GM12878 (cell line): ENCODE measurements at regions of chr5 and their contacts with region 1.

Region 1: DNA sequence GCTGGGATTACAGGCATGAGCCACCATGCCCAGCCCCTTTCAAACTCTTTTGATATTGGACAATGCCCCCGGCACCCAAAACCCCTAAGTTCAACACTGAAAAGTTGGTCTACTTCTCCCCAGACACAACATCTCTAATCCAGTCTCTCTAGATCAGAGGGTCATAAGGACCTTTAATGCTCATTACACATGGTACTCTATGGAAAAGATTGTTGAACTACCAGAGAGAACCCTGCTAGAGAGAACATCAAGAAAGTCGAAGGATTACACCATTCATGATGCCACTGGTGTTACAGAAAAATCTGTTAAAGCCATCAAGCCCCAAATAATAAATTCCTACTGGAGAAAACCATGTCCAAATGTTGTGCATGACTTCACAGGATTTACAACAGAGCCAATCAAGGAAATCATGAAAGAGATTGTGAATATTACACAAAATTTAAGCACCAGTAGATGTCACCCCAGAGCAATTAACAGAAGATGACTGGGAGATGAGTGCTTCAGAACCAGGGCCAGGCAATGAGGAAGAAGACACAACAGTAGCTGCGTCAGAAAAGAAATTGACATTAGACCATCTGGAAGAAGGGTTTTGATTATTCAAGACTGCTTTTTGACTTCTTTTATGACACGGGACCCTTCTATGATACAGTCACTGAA is 28.3 kb upstream of the NIPAL4 start:
- DNase-seq: peak; percentile 35
- ATAC-seq: peak; percentile 99
- H3K4me3 ChIP-seq: no peak overlapping the region
- H3K27ac ChIP-seq: no peak overlapping the region
- H3K4me1 ChIP-seq: no peaks in the 10 kb centered on the region
- H3K27me3 ChIP-seq: no peaks in the 10 kb centered on the region
- CTCF ChIP-seq: peak; percentile 47 to 65 (median 56); a peak in 5 of 6 replicates
- EP300 ChIP-seq: no peak
- POLR2A ChIP-seq: no peak
- RAD21 ChIP-seq: peak; percentile 85

Region 2: GRCh38 chr5:156815988-156816599 is 615.6 kb before region 1 on chr5:
- CTCF ChIA-PET with region 1: no interaction called
- POLR2A ChIA-PET with region 1: no interaction called
- RAD21 ChIA-PET with region 1: no interaction called
- SMC1A ChIA-PET with region 1: no interaction called
- in situ Hi-C with region 1: no loop called
- intact Hi-C with region 1: no loop called
- DNase-seq: no peak
- ATAC-seq: peak; percentile 79
- H3K4me3 ChIP-seq: no peak overlapping the region
- H3K27ac ChIP-seq: no peak overlapping the region
- H3K4me1 ChIP-seq: peaks cover 7% of the 10 kb centered on the region; the same call in 1 of the 2 replicates
- H3K27me3 ChIP-seq: no peaks in the 10 kb centered on the region
- CTCF ChIP-seq: peak; percentile 50 to 71 (median 53)
- EP300 ChIP-seq: no peak
- POLR2A ChIP-seq: no peak
- RAD21 ChIP-seq: peak; percentile 85

Region 3: DNA sequence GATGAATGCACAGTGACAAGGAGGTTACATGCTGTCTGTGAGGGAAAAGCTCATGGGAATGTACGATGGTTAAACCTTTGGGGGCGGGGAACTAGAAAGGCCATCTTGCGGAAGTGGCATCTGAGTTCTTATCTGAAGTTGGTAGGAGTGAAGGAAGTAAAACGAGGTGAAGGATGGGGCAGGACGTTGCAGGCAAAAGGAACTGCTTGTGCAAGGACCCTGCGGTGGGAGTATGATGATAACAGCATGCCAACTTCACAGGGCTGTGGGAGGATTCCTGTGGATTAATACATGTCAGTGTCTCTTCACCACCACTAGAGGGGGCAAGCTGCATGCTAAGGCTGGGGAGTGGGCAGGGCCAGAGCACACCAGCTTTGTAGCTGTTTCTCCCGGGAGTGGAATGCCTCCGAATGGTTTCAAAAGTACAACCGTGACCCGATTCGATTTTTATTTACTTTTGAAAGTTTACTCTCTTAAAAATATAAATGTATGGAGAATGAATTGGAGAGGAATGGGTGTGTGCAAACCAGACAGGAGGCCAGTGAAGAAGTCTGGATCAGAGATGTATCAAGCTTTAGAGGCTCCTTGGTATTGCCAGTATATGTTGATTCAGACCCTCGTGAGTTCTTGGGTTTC is 103.3 kb before region 1 on chr5:
- CTCF ChIA-PET with region 1: interaction called, 22 read pairs
- POLR2A ChIA-PET with region 1: no interaction called
- RAD21 ChIA-PET with region 1: interaction called, 6 read pairs
- SMC1A ChIA-PET with region 1: interaction called, 3 read pairs
- in situ Hi-C with region 1: no loop called
- intact Hi-C with region 1: no loop called
- DNase-seq: no peak
- ATAC-seq: peak; percentile 100
- H3K4me3 ChIP-seq: no peak overlapping the region
- H3K27ac ChIP-seq: no peak overlapping the region
- H3K4me1 ChIP-seq: no peaks in the 10 kb centered on the region
- H3K27me3 ChIP-seq: no peaks in the 10 kb centered on the region
- CTCF ChIP-seq: peak; percentile 85 to 94 (median 91)
- EP300 ChIP-seq: no peak
- POLR2A ChIP-seq: no peak
- RAD21 ChIP-seq: peak; percentile 85

Region 4: GRCh38 chr5:157443041-157443549 is 11.4 kb after region 1 on chr5:
- CTCF ChIA-PET with region 1: interaction called, 16 read pairs
- POLR2A ChIA-PET with region 1: no interaction called
- RAD21 ChIA-PET with region 1: interaction called, 3 read pairs
- SMC1A ChIA-PET with region 1: interaction called, 7 read pairs
- in situ Hi-C with region 1: no loop called
- intact Hi-C with region 1: no loop called
- DNase-seq: no peak
- ATAC-seq: no peak
- H3K4me3 ChIP-seq: no peak overlapping the region
- H3K27ac ChIP-seq: no peak overlapping the region
- H3K4me1 ChIP-seq: no peaks in the 10 kb centered on the region
- H3K27me3 ChIP-seq: no peaks in the 10 kb centered on the region
- CTCF ChIP-seq: no peak
- EP300 ChIP-seq: no peak
- POLR2A ChIP-seq: no peak
- RAD21 ChIP-seq: no peak

Region 5: DNA sequence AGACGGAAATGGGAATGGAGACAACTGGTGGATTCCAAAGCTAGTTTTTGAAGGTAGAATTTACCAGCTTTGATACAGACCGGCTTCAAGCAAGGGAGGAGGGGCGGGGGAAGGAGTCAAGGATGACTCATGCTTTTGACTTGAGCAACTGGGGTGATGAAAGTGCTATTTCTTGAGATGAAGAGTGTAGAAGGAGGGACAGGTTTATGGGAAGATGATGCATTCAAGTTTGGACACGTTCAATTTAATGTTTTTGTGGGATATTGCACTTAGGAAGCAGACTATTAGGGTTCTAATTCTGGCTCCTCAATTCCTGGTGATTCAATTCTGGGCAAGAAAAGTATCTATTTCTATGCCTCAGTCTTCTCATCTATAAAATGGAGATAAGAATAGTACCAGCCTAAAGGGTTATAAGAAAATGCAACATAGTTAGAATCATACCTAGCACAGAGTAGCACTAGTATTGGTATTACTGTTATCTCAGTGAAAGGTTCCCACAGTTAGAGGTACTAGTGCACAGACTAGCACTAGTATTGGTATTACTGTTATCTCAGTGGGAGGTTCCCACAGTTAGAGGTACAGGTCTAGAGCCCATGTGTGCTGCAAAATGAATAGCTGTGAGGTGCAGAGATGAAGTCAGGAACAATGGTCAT is 33.0 kb after region 1 on chr5:
- CTCF ChIA-PET with region 1: interaction called, 248 read pairs
- POLR2A ChIA-PET with region 1: interaction called, 3 read pairs
- RAD21 ChIA-PET with region 1: interaction called, 93 read pairs
- SMC1A ChIA-PET with region 1: interaction called, 119 read pairs
- in situ Hi-C with region 1: no loop called
- intact Hi-C with region 1: no loop called
- DNase-seq: peak; percentile 28
- ATAC-seq: peak; percentile 84
- H3K4me3 ChIP-seq: peak overlapping the region; percentile 6; the same call in 1 of the 2 replicates
- H3K27ac ChIP-seq: peak overlapping the region; percentile 78
- H3K4me1 ChIP-seq: peaks cover 23% of the 10 kb centered on the region
- H3K27me3 ChIP-seq: no peaks in the 10 kb centered on the region; a peak in 2 of 4 replicates
- CTCF ChIP-seq: no peak
- EP300 ChIP-seq: no peak
- POLR2A ChIP-seq: no peak
- RAD21 ChIP-seq: no peak

Region 6: GRCh38 chr5:157476702-157477408 is 45.2 kb after region 1 on chr5:
- CTCF ChIA-PET with region 1: interaction called, 248 read pairs
- POLR2A ChIA-PET with region 1: no interaction called
- RAD21 ChIA-PET with region 1: interaction called, 93 read pairs
- SMC1A ChIA-PET with region 1: interaction called, 119 read pairs
- in situ Hi-C with region 1: no loop called
- intact Hi-C with region 1: loop called (anchors 2 kb)
- DNase-seq: no peak
- ATAC-seq: peak; percentile 85
- H3K4me3 ChIP-seq: no peak overlapping the region
- H3K27ac ChIP-seq: no peak overlapping the region
- H3K4me1 ChIP-seq: no peaks in the 10 kb centered on the region
- H3K27me3 ChIP-seq: no peaks in the 10 kb centered on the region
- CTCF ChIP-seq: peak; percentile 74 to 77 (median 77)
- EP300 ChIP-seq: no peak
- POLR2A ChIP-seq: no peak
- RAD21 ChIP-seq: peak; percentile 89

Region 7: GRCh38 chr5:157665467-157666100 is 233.9 kb after region 1 on chr5:
- CTCF ChIA-PET with region 1: interaction called, 9 read pairs
- POLR2A ChIA-PET with region 1: no interaction called
- RAD21 ChIA-PET with region 1: interaction called, 5 read pairs
- SMC1A ChIA-PET with region 1: interaction called, 6 read pairs
- in situ Hi-C with region 1: no loop called
- intact Hi-C with region 1: loop called (anchors 5 kb)
- DNase-seq: no peak
- ATAC-seq: no peak
- H3K4me3 ChIP-seq: no peak overlapping the region
- H3K27ac ChIP-seq: no peak overlapping the region
- H3K4me1 ChIP-seq: no peaks in the 10 kb centered on the region; the same call in 1 of the 2 replicates
- H3K27me3 ChIP-seq: no peaks in the 10 kb centered on the region
- CTCF ChIP-seq: no peak
- EP300 ChIP-seq: no peak
- POLR2A ChIP-seq: no peak
- RAD21 ChIP-seq: no peak

Region 8: DNA sequence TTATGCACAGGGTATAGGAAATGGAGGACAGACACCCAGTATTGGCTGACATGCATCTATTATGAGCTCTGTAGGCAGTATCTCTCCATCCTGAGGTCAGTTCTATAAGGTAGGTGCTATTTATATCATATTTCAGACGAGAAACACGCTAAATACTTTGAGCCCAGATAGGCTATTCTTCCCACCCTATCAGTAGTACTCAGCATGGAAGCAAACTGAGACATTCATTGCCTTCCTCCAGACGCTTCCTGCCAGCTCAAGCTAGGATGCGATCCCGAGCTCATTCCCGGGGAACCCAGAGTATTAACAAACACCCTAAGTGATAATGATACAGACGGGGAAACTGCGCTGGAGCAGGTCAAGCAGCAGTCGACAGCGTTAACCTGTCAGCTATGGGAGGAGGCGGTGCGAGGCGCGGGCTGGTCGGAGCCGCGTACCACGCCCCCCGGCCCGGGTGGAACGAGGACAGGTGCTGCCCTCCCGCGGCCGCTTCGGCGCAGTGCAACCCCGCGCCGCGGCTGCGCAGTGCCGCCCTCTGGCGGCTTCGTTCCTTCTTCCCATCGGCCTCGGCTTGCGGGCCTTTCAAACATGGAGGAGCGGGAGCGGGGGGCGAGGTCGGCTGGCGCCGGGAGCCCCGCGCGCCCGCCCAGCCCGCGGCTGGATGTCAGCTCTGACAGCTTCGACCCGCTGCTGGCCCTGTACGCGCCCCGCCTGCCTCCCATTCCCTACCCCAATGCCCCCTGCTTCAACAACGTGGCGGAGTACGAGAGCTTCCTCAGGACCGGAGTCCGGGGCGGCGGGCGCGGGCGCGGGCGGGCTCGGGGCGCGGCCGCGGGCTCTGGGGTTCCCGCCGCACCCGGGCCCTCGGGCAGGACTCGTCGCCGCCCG is 311.7 kb after region 1 on chr5 and contains the start of gene LSM11:
- CTCF ChIA-PET with region 1: interaction called, 59 read pairs
- POLR2A ChIA-PET with region 1: no interaction called
- RAD21 ChIA-PET with region 1: interaction called, 26 read pairs
- SMC1A ChIA-PET with region 1: interaction called, 26 read pairs
- in situ Hi-C with region 1: no loop called
- intact Hi-C with region 1: loop called (anchors 2 kb)
- DNase-seq: peak; percentile 56
- ATAC-seq: peak; percentile 93
- H3K4me3 ChIP-seq: peak within 1 kb of the TSS; percentile 85
- H3K27ac ChIP-seq: peak within 1 kb of the TSS; percentile 45; the same call in 1 of the 2 replicates
- H3K4me1 ChIP-seq: peaks cover 12% of the 10 kb centered on the region; the same call in 1 of the 2 replicates
- H3K27me3 ChIP-seq: no peaks in the 10 kb centered on the region
- CTCF ChIP-seq: peak; percentile 97 to 100 (median 99); a peak in 5 of 6 replicates
- EP300 ChIP-seq: no peak
- POLR2A ChIP-seq: peak; percentile 64
- RAD21 ChIP-seq: peak; percentile 87
- polyA plus RNA-seq, gene LSM11: 1.5 to 2.1 TPM